Right ventricle myocardium inferior (tissue), 1 donor: ENCODE measurements at regions of chr10 and their contacts with region 1.

Region 1: GRCh38 chr10:17607603-17608332 is 9.4 kb downstream of the HACD1 start:
- DNase-seq: no peak
- ATAC-seq: peak; percentile 83

Region 2: DNA sequence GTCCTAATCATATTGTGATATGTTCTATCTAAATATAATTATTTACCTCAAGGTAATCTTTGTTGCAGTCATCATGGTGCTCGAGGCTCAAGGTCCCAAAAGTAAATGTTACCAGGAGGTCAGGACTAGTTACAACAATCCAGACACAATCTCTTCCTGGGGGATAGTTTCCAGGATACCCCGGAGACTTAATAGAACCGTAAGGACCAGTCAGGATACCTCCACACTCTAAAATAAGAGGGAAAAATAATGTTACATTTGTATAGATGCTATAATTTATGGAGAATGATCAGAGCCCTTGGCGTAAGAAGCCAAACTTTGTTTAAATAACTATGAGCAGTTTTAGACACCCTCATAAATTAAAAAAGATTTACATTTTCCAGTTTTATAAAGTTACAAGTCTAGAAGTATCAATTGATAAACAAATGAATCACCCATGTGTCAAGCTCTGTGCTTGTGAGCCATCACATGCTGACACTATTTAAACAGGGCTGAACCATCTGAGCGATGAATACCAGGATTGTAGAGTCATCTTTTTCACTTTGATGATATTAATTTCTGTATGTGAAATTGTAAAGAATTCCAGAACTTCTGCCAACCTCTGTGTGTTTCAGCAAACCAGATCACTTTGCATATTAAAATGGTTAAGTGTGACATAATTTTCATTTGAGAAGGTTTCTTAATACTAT is 519.5 kb before region 1 on chr10:
- intact Hi-C with region 1: no loop called
- DNase-seq: no peak
- ATAC-seq: no peak

Region 3: DNA sequence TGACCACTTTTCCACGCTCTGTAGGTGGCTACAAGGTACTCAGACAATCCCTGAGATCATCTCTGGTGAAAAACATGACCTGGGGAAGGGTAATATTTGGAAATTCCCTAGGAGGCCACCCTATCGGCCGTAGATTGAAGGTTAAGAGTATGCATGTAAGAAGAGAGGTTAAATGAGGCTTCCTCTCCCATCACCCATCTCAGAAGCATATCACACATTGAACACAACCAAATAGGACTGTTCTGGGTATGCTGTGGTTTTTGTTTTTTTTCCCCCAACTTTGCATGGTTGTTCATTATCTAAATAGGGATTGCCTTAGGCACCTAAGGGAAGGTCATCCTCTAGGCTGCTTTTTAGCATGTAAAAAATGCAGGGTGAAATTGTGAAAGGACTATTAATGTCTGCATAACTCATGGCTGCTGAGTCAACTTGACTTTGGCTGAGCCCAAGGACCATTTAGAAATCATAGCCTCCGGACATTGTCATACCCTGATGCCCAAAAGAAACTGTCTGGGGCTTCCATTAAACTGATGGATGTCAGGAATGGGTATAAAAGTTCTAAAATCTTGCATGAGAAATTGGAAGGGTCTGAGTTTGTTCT is 128.7 kb before region 1 on chr10:
- intact Hi-C with region 1: no loop called
- DNase-seq: no peak
- ATAC-seq: no peak

Region 4: DNA sequence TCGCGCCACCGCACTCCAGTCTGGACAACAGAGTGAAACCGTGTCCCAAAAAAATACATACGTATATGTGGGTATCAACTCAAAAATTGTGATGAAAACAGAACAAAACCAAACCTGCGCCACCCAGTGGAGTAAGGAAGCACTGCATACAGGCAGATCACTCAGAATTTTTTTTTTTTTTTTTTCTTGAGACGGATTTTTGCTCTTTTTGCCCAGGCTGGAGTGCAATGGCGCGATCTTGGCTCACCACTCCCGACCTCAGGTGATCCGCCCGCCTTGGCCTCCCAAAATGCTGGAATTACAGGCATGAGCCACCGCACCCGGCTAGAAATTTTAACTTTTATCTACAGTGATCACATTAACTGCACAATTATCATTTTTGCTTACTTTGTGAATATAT is 135.2 kb after region 1 on chr10:
- intact Hi-C with region 1: loop called (anchors 2 kb)
- DNase-seq: no peak
- ATAC-seq: no peak